Gastrocnemius medialis (tissue), 4 donors: ENCODE measurements at regions of chr1 and their contacts with region 1.

Region 1: DNA sequence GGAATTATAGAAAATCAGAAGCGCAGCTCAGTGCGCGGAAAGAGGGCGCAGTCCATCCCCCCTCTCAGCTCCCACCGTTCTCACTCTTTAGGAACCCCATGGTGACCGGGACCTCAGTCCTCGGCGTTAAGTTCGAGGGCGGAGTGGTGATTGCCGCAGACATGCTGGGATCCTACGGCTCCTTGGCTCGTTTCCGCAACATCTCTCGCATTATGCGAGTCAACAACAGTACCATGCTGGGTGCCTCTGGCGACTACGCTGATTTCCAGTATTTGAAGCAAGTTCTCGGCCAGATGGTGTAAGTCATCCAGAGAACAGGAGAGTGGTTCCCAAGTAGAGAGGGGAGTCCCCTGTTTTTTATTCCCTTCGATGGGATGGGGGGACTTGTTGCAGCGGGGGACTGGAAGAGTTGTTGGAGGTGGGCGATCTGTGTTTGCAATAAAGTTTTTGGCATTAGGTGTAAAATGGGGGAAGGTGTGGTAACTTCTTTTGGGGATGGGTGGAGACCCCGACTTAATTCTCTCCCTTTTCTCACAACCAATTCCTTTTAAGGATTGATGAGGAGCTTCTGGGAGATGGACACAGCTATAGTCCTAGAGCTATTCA is 620 bp downstream of the PSMB4 start:
- DNase-seq: peak in 1 of 2 donors; percentile 23
- ATAC-seq: peak; percentile 17 to 42
- H3K4me3 ChIP-seq: peak overlapping the region; percentile 82 to 98 (median 94)
- H3K27ac ChIP-seq: peak overlapping the region; percentile 95 to 98 (median 97)
- H3K4me1 ChIP-seq: peaks cover 13 to 17% of the 10 kb centered on the region in 2 donors
- H3K27me3 ChIP-seq: no peaks in the 10 kb centered on the region
- CTCF ChIP-seq: no peak
- POLR2A ChIP-seq: no peak

Region 2: DNA sequence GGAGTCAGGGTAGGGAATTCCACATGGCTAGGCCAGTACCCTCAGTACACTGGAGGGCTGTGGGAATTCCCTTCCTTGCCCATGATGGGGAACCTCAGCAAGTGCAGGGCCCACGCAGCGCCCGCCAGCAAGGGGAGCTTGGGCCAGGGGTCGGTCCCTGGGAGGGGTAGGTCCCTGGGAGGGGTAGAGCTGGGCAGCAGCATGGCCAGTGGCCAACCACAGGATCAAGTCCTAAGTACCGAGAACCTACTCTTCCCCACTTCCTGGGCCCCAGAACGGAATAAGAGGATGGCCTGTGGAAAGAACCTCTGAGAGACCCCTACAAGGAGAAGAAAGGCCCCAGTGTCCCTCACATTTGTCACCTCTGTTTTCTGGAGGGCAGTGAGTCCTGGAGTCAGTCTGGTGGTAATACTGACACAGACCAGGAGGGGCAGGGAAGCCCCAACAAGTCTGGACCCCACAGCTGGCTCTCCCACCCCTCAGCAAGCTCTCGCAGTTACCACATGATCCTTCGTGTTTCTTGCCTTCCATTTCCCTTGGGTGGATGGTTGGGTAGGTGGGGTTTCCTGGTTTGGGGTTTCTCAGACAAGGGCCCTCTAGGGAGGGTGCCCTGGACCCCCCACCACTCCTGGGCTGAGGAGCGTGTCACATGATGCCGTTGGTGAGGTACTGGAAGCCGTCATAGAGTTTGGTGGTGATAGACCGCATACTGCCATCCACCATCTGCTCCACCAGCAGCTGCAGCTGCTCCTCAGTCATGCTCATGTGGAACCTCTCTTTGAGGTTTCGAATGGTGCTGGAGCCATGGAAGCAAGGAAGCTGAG is 107.6 kb before region 1 on chr1:
- in situ Hi-C with region 1: loop called in 1 of 4 experiments (anchors 10 kb)
- intact Hi-C with region 1: no loop called
- DNase-seq: no peak
- ATAC-seq: no peak
- H3K4me3 ChIP-seq: no peak overlapping the region
- H3K27ac ChIP-seq: no peak overlapping the region
- H3K4me1 ChIP-seq: no peaks in the 10 kb centered on the region
- H3K27me3 ChIP-seq: no peaks in the 10 kb centered on the region
- CTCF ChIP-seq: no peak
- POLR2A ChIP-seq: no peak

Region 3: DNA sequence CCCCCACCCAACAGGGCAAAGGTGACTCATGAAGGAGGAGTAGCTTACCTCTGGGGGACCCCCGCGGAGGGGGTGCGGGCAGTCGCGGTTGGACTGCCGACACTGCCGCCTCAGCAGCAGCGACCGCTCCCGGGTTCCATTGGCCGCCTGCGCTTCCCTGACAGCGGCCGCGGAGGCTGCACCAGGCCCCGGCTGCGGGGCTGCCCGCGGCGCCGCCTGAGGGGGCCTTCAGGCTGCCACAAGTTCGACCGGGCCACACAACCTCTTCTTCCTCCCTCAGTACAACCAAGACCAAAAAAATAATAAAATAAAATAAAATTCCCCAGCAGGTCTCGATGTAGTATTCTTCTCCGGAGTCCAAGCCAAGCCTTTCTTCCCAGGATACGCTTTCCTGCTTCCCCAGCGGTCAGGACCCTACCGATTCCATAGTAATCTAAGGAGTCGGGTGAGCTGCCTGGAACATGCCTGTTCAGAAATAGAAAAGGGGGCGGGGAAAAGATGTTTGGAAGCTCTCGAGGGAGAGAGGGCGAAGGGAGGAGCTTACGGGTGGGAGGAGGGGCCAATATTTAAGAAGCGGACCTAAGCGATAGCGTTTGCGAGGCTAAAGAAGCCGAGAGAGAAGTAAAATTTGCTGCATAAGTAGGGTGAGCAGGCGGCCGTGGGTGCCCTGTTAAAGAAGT is 72.6 kb before region 1 on chr1 and contains the start of gene PI4KB:
- in situ Hi-C with region 1: no loop called
- intact Hi-C with region 1: loop called (anchors 1 kb)
- DNase-seq: peak; percentile 92 to 95
- ATAC-seq: peak; percentile 98
- H3K4me3 ChIP-seq: peak within 1 kb of the TSS; percentile 71 to 97 (median 78)
- H3K27ac ChIP-seq: peak within 1 kb of the TSS; percentile 92 to 96 (median 94)
- H3K4me1 ChIP-seq: peaks cover 32 to 40% of the 10 kb centered on the region in 2 donors
- H3K27me3 ChIP-seq: no peaks in the 10 kb centered on the region
- CTCF ChIP-seq: peak in 2 of 5 experiments; percentile 16 to 17
- POLR2A ChIP-seq: peak; percentile 70 to 91
- total RNA-seq, gene PI4KB: 65.5 to 98.1 (median 77.3) TPM

Region 4: DNA sequence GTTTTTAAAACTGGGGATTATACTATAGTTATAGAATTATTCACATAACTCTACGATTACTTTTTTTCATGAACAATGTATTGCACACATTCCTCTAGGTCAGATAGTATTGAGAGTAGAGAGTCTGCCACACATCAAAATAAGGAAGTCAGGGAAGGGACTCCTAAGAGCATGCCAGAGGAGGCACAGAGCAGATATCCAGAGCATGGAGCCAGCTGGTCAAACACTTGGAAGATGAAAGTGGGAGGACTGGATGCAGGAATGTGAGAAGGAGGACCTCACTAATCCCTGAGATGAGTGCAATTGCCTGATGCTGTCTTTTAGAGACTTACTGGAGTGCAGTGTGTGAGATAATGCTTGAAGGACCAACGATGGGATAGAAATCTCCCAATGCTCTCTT is 43.3 kb before region 1 on chr1:
- in situ Hi-C with region 1: loop called in 1 of 4 experiments (anchors 5 kb)
- intact Hi-C with region 1: no loop called
- DNase-seq: no peak
- ATAC-seq: no peak
- H3K4me3 ChIP-seq: no peak overlapping the region
- H3K27ac ChIP-seq: no peak overlapping the region
- H3K4me1 ChIP-seq: no peaks in the 10 kb centered on the region
- H3K27me3 ChIP-seq: no peaks in the 10 kb centered on the region
- CTCF ChIP-seq: no peak
- POLR2A ChIP-seq: no peak

Region 5: DNA sequence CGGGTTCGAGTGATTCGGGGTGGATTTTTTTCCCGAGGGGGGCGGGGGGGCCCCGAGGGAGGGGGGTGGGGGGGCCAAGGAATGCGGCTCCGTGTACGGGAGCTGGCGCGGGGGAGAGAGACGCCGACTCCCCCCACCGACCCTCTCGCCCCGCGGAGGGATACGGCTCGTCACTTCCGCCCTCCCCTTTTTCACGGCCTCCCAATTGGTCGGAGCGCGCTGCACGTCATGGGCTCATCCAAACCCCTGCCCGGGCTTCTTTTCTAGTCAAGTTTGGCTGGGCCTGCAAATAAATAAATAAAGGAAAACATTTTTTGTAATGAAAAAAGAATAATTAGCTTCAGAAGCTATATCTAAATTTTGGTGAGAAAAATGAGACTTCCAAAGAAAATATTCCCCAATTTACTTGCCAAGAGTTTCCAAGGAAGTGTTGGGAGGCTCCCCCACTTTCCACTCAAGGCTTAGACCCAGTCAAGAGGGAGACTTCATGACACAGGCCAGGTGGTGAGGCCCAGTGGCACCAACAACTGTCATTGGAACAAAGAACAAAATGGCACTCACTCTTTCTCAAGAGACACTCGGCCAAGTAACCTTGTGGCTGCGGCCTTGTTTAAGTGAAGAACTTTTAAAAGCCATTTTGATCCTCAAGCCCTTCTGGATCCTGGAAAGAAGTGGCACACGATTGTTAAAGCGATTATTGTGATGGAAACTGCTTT is 59.5 kb after region 1 on chr1 and contains the start of gene POGZ:
- in situ Hi-C with region 1: no loop called
- intact Hi-C with region 1: loop called (anchors 2 kb)
- DNase-seq: peak; percentile 91 to 95
- ATAC-seq: peak; percentile 82 to 83
- H3K4me3 ChIP-seq: peak within 1 kb of the TSS; percentile 76 to 97 (median 84)
- H3K27ac ChIP-seq: peak within 1 kb of the TSS; percentile 87 to 98 (median 96)
- H3K4me1 ChIP-seq: peaks cover 11 to 16% of the 10 kb centered on the region in 2 donors
- H3K27me3 ChIP-seq: peaks cover 0 to 2% (median 0%) of the 10 kb centered on the region in 3 donors
- CTCF ChIP-seq: no peak
- POLR2A ChIP-seq: peak; percentile 37 to 39
- total RNA-seq, gene POGZ: 14.1 to 20.2 (median 15.1) TPM

Region 6: GRCh38 chr1:151510957-151511635 is 111.1 kb after region 1 on chr1 and contains the start of gene CGN:
- in situ Hi-C with region 1: no loop called
- intact Hi-C with region 1: no loop called
- DNase-seq: peak; percentile 50 to 51
- ATAC-seq: peak; percentile 83 to 86
- H3K4me3 ChIP-seq: peak within 1 kb of the TSS; percentile 60 to 80 (median 63)
- H3K27ac ChIP-seq: no peak within 1 kb of the TSS
- H3K4me1 ChIP-seq: peaks cover 8 to 13% of the 10 kb centered on the region in 2 donors
- H3K27me3 ChIP-seq: peaks cover 11 to 32% (median 16%) of the 10 kb centered on the region in 3 donors
- CTCF ChIP-seq: no peak
- POLR2A ChIP-seq: no peak
- total RNA-seq, gene CGN: 0.34 to 0.78 TPM in 2 of 4 donors, not detected in the others

Region 7: DNA sequence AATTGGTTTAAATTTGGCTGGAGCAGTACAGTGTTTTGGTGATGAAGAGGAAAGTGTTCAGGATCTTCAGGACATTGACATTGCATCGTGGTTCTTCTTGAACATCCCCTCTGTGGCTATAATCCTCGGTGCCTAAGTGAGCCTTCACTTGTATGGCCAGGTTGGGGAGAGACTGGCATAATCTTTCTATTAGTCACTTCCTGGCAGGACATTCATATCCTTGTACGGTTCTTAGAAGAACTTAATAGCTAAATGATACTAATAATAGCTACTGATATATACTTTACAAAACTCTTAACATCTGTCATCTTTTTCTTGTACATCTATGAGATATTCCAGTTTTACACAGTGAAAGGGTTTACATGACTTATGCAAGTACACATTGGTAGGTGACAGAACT is 280.8 kb after region 1 on chr1:
- in situ Hi-C with region 1: no loop called
- intact Hi-C with region 1: no loop called
- DNase-seq: no peak
- ATAC-seq: no peak
- H3K4me3 ChIP-seq: no peak overlapping the region
- H3K27ac ChIP-seq: no peak overlapping the region
- H3K4me1 ChIP-seq: peaks cover 3 to 7% of the 10 kb centered on the region in 2 donors
- H3K27me3 ChIP-seq: no peaks in the 10 kb centered on the region
- CTCF ChIP-seq: no peak
- POLR2A ChIP-seq: no peak